T-cell (primary cell): ENCODE measurements at regions of chr5 and their contacts with region 1.

Region 1: GRCh38 chr5:160333721-160334120 is 21.4 kb upstream of the CCNJL start:
- DNase-seq: no peak
- ATAC-seq: no peak
- H3K4me3 ChIP-seq: no peak overlapping the region
- H3K4me3 Mint-ChIP-seq: no peak overlapping the region
- H3K27ac ChIP-seq: no peak overlapping the region
- H3K27ac Mint-ChIP-seq: no peak overlapping the region
- H3K4me1 ChIP-seq: no peaks in the 10 kb centered on the region
- H3K4me1 Mint-ChIP-seq: peaks cover 0 to 4% (median 2%) of the 10 kb centered on the region in 3 donors
- H3K27me3 ChIP-seq: peaks cover 0 to 3% of the 10 kb centered on the region in 2 experiments
- H3K27me3 Mint-ChIP-seq: peaks cover 2 to 7% of the 10 kb centered on the region in 2 donors

Region 2: DNA sequence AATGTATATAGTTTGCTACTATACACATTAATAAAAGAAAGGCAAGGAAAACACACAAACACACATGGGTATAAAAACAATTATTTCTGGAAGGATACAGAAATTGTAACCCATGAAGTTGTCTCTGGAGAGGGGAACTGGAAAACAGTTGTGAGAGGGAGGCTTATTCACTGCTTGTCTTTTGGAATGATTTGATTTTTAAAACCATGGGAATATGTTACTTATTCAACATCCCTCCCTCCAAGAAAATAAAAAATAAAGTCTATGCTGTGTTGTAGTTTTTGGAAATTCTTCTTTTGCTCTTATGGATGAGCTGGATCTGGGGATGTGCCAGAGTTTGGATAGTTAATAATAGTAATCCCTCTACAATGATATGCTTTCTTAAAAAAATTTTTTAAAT is 42.7 kb after region 1 on chr5:
- CTCF ChIA-PET with region 1: interaction called in 1 of 2 experiments, 16 read pairs
- POLR2A ChIA-PET with region 1: no interaction called
- DNase-seq: no peak
- ATAC-seq: no peak
- H3K4me3 ChIP-seq: no peak overlapping the region
- H3K4me3 Mint-ChIP-seq: no peak overlapping the region
- H3K27ac ChIP-seq: no peak overlapping the region
- H3K27ac Mint-ChIP-seq: no peak overlapping the region
- H3K4me1 ChIP-seq: no peaks in the 10 kb centered on the region
- H3K4me1 Mint-ChIP-seq: no peaks in the 10 kb centered on the region
- H3K27me3 ChIP-seq: no peaks in the 10 kb centered on the region
- H3K27me3 Mint-ChIP-seq: peaks cover 45 to 49% of the 10 kb centered on the region in 2 donors